Cardiac septum (tissue), 1 donor: ENCODE measurements at regions of chr17 and their contacts with region 1.

Region 1: GRCh38 chr17:57987580-57988421 is at the start of gene VEZF1:
- DNase-seq: peak; percentile 89
- total RNA-seq, gene VEZF1: 55.3 TPM

Region 2: DNA sequence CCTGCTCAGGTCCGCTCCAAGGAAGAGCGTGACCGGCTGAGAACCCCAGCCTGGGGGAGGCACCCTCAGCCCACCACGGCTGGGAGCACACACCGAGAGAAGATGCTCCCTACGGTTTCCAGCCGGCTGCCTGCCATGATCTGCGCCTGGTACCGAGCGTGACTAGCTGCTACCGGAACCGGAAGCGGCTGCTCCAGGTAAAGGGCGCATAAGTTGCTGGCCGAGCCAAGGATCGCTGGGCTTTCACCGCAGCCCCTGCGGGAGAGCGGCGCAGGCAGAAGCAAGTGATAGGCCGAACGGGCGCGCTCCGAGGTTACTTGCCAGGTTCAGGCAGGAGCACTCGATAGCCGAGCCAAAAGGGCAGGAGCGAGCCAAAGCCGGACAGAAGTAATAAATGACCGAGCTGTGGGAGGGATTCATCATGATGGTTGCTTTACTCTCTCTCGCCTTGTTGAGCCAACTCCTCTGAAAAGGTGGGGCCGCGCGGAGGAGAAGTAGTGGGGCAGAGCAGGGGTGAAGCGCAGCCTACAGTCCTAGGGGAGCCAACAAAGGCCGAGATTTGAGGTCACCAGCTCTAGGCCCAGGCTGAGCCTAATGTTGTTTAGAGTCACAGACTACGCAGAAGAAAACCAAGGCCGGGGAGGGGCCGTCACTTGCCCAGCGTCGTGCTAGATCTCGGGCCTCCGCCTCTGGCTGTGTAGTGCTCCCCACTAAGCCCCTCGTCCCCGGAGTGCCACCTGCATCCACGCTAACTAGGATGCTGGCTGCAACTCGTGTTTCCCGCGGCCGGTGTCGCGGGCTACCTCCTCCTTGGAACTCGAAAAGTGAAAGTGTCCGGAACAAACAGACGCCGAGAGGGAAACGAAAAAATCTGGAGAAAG is 137.7 kb before region 1 on chr17 and contains the start of gene MRPS23:
- intact Hi-C with region 1: loop called (anchors 2 kb)
- DNase-seq: peak; percentile 99
- total RNA-seq, gene MRPS23: 59.6 TPM

Region 3: DNA sequence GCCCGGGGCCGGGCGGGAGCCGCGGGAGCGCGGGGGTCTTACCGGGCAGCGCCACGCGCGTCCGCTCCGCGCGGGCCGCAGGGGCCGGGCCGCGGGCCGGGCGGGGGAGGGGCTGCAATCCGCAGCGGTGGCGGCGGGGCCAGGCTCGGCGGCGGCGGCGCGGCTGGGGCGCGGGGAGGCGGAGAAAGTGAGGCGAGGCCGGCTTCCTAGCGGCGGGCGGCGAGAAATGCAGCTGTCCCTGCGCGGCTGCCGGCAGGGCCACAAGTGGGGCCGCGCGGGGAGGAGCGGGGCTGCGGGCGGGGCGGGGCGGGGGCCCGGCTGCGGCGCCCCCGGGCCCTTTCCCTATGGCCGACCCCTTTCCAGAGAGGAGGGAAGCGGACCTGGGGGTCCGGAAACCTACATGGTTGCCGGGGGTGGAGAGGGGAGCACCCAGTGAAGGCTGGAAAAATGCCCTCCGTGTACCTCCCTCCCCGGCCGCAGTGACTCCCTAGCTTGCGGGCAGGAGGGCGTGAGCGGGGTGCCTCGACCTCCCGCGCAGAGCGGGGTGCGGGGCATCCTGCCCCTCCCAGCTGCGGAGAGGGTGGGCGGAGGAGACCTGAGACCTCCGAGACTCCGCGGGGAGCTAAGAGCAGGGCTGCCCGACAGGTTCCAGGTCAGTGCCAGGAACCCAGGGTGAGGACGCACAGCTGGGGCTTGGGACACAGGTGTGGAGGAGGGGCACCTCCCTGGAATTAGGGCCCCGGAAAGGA is 32.4 kb before region 1 on chr17 and contains the start of gene CUEDC1:
- intact Hi-C with region 1: loop called (anchors 2 kb)
- DNase-seq: peak; percentile 92
- total RNA-seq, gene CUEDC1: 46.6 TPM